ENCODE measurements at regions of chr13 and their contacts with region 1.

Region 1: GRCh38 chr13:20127577-20128466 is 33.0 kb downstream of the GJA3 start:
- DNase-seq: peak in 1 of 2 donors; percentile 84
- H3K4me3 ChIP-seq: peak overlapping the region; percentile 54 to 65
- H3K27ac ChIP-seq: peak overlapping the region; percentile 70 to 92
- H3K4me1 ChIP-seq: peaks cover 0 to 36% (median 18%) of the 10 kb centered on the region in 4 donors
- H3K27me3 ChIP-seq: peaks cover 0 to 10% of the 10 kb centered on the region in 2 donors
- CTCF ChIP-seq: peak; percentile 22 to 46

Region 2: GRCh38 chr13:19952850-19953249 is 175.0 kb before region 1 on chr13:
- intact Hi-C with region 1: no loop called
- DNase-seq: no peak
- H3K4me3 ChIP-seq: no peak overlapping the region
- H3K27ac ChIP-seq: no peak overlapping the region
- H3K4me1 ChIP-seq: no peaks in the 10 kb centered on the region
- H3K27me3 ChIP-seq: no peaks in the 10 kb centered on the region
- CTCF ChIP-seq: no peak

Region 3: DNA sequence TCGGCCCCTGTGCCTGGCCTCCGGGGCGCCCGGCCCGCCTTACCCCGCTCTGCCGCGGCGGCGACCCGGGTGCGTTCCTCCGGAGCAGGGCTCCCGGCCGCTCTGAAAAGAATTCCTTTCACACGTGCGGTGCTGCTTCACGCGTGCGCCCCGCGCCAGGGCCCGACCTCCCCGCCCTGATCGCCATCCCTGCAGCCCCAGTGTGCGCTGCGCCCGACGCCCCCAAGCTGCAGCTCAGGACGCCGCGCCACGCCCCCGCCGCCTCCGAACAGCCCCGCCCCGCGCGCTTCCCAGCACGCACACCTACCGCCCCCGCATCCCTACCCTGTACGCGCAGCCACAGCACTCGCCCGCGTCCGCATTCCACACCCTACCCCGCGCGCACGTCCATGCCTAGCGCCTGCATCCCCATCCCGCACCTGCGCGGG is 33.0 kb after region 1 on chr13 and contains the start of gene GJA3:
- intact Hi-C with region 1: loop called (anchors 5 kb)
- DNase-seq: no peak
- H3K4me3 ChIP-seq: peak within 1 kb of the TSS; percentile 19 to 48
- H3K27ac ChIP-seq: no peak within 1 kb of the TSS
- H3K4me1 ChIP-seq: peaks cover 0 to 20% (median 13%) of the 10 kb centered on the region in 4 donors
- H3K27me3 ChIP-seq: peaks cover 0 to 76% of the 10 kb centered on the region in 2 donors
- CTCF ChIP-seq: no peak

Region 4: DNA sequence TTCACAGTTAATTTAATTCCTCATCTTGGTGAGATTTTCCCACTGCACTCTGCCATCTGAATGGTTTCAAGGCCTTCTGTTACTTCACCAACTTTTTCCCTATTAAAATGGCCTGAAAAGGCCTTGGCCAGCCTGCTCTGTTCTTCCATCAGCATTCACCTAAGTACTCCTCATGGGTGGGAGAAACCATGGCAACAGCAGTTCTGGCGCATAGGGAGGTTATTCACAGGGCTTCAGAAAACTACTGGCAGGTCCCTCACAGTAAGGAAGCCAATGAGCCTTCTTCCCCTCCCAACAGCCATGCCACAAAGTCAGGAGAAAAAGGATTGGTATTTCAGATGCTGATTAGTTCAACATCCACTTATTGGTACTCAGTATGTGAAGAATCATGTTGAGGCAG is 82.1 kb after region 1 on chr13:
- intact Hi-C with region 1: no loop called
- DNase-seq: no peak
- H3K4me3 ChIP-seq: no peak overlapping the region
- H3K27ac ChIP-seq: no peak overlapping the region
- H3K4me1 ChIP-seq: no peaks in the 10 kb centered on the region
- H3K27me3 ChIP-seq: peaks cover 0 to 26% of the 10 kb centered on the region in 2 donors
- CTCF ChIP-seq: no peak

Measured in tibial artery (tissue), 4 donors.